ENCODE measurements at regions of chr3 and their contacts with region 1.

Region 1: DNA sequence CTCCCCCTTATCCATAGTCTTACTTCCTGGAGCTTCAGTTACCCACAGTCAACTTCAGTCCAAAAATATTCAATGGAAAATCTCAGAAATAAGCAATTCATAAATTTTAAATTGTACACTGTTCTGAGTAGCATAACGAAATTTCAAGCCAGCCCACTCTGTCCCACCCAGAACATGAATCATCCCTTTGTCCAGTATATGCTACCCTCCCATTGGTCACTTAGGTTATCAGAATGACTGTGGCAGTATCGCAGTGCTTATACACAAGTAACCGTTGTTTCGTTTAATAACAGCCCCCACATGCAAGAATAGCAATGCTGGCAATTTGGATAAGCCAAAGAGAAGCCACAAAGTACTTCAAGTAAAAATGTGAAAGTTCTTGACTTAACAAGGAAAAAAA is 325.3 kb upstream of the ADAMTS9 start:
- DNase-seq: no peak
- ATAC-seq: no peak
- H3K4me3 ChIP-seq: no peak overlapping the region
- H3K27ac ChIP-seq: no peak overlapping the region
- H3K4me1 ChIP-seq: no peaks in the 10 kb centered on the region
- H3K27me3 ChIP-seq: no peaks in the 10 kb centered on the region
- CTCF ChIP-seq: no peak

Region 2: GRCh38 chr3:64783200-64783599 is 229.9 kb before region 1 on chr3:
- intact Hi-C with region 1: loop called in 1 of 2 experiments (anchors 5 kb)
- DNase-seq: no peak
- ATAC-seq: no peak
- H3K4me3 ChIP-seq: no peak overlapping the region
- H3K27ac ChIP-seq: no peak overlapping the region
- H3K4me1 ChIP-seq: no peaks in the 10 kb centered on the region
- H3K27me3 ChIP-seq: no peaks in the 10 kb centered on the region
- CTCF ChIP-seq: no peak

Region 3: GRCh38 chr3:65439641-65440284 is 426.7 kb after region 1 on chr3:
- intact Hi-C with region 1: no loop called
- DNase-seq: peak; percentile 21 to 63
- ATAC-seq: peak; percentile 80 to 98 (median 84)
- H3K4me3 ChIP-seq: no peak overlapping the region
- H3K27ac ChIP-seq: no peak overlapping the region
- H3K4me1 ChIP-seq: no peaks in the 10 kb centered on the region
- H3K27me3 ChIP-seq: no peaks in the 10 kb centered on the region
- CTCF ChIP-seq: peak; percentile 68

Measured in psoas muscle (tissue), 8 donors.